HCT116 (cell line): ENCODE measurements at regions of chr4 and their contacts with region 1.

Region 1: DNA sequence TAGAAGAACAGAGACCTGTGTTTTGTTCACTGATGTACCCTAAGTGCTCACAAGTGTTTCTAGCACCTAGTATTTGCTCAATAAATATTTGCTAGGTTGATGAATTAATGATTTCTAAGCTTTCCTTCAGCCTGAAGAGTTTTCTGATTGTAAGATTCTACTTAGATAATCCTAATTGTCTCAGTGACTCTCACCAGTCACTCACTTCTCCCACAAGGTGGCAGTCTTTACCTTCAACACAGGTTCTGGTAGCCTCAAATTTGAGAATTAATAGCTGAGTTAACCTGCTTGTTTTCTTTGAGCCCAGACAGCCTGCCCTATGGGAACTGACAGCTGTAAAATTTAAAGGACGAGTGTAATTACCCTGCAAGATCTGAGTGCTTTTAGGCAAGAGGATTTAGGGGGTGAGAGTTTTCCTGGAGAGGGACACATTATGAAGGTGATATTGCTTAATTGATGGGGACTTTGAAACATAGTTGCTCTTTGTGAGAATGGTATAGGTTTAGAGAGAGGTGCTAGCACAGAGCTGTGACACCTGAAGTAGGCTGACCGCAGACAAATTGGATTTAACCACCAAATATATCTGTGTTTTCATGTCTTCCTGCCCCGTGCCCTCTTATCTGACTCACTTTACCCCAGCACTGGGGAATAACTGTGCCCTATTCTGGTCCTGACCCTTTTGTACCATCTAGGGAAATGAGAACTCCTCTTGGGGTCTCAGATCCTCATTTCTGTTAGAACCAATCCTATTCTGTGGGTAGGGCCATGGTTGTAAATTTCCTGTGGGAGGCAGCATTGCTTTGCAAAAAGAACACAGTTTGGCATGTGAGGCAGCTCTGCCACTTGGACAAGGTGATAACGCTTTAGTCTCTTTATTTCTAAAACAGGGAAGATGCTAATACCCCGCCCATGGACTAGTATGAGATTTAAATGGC is 27.7 kb downstream of the CD38 start:
- DNase-seq: peak; percentile 57
- ATAC-seq: peak; percentile 93
- H3K4me3 ChIP-seq: no peak overlapping the region
- H3K27ac ChIP-seq: no peak overlapping the region
- H3K4me1 ChIP-seq: no peaks in the 10 kb centered on the region
- H3K27me3 ChIP-seq: no peaks in the 10 kb centered on the region
- CTCF ChIP-seq: peak; percentile 71 to 90 (median 80)
- POLR2A ChIP-seq: no peak
- RAD21 ChIP-seq: peak; percentile 94

Region 2: DNA sequence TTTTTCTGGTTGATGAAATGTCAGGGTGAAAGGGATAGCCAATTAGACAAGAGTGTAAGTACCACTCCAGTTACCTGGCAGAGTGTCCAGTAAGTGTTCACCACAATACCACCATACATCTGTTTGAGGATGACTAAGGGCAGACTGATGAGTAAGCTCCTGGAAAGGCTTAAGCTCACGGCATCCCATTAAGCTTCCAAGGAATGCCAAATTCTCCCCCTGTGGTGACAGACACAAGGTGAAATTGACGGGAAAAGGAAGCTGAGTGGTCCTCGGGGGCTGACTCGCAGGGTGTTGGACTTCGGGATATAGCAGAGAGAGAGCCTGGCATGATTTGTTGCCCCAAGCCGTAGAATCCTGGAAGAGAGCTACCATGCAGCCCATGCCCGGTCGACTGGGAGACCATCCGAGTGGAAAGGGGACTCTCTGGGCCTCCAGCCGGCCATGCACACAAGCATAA is 110.6 kb before region 1 on chr4:
- CTCF ChIA-PET with region 1: no interaction called
- POLR2A ChIA-PET with region 1: no interaction called
- RAD21 ChIA-PET with region 1: no interaction called
- intact Hi-C with region 1: no loop called
- DNase-seq: peak; percentile 68
- ATAC-seq: peak; percentile 81
- H3K4me3 ChIP-seq: no peak overlapping the region
- H3K27ac ChIP-seq: no peak overlapping the region
- H3K4me1 ChIP-seq: peaks cover 6 to 42% of the 10 kb centered on the region in 2 experiments
- H3K27me3 ChIP-seq: no peaks in the 10 kb centered on the region
- CTCF ChIP-seq: no peak
- POLR2A ChIP-seq: no peak
- RAD21 ChIP-seq: no peak

Region 3: DNA sequence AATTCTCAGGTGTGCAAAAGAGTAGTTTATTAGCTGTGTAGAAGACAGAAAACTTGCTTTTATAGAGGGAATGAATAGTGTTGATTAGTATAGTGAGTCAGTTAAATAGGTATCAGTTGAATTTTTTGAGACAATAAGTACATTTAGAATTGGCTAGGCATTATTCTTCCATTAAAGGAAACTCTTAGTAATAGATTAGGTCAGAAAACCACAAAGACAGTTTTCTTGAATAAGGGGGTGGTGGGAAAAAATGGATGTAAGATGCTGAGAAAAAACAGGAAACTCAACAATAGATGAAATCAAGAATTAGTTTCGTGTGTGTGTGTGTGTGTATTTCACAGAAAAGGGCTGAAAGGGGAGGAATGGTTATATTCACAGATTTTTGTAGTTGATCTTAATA is 10.9 kb before region 1 on chr4:
- CTCF ChIA-PET with region 1: interaction called, 14 read pairs
- POLR2A ChIA-PET with region 1: no interaction called
- RAD21 ChIA-PET with region 1: no interaction called
- intact Hi-C with region 1: no loop called
- DNase-seq: no peak
- ATAC-seq: no peak
- H3K4me3 ChIP-seq: no peak overlapping the region
- H3K27ac ChIP-seq: no peak overlapping the region
- H3K4me1 ChIP-seq: no peaks in the 10 kb centered on the region
- H3K27me3 ChIP-seq: no peaks in the 10 kb centered on the region
- CTCF ChIP-seq: no peak
- POLR2A ChIP-seq: no peak
- RAD21 ChIP-seq: no peak

Region 4: GRCh38 chr4:15882675-15883086 is 76.8 kb after region 1 on chr4:
- CTCF ChIA-PET with region 1: interaction called, 76 read pairs
- POLR2A ChIA-PET with region 1: no interaction called
- RAD21 ChIA-PET with region 1: interaction called, 7 to 12 read pairs
- intact Hi-C with region 1: loop called (anchors 1 kb)
- DNase-seq: peak; percentile 79
- ATAC-seq: peak; percentile 97
- H3K4me3 ChIP-seq: no peak overlapping the region
- H3K27ac ChIP-seq: no peak overlapping the region
- H3K4me1 ChIP-seq: no peaks in the 10 kb centered on the region
- H3K27me3 ChIP-seq: no peaks in the 10 kb centered on the region
- CTCF ChIP-seq: peak; percentile 89 to 96 (median 95)
- POLR2A ChIP-seq: no peak
- RAD21 ChIP-seq: peak; percentile 98

Region 5: GRCh38 chr4:16001484-16001858 is 195.6 kb after region 1 on chr4:
- CTCF ChIA-PET with region 1: interaction called, 37 read pairs
- POLR2A ChIA-PET with region 1: no interaction called
- RAD21 ChIA-PET with region 1: interaction called in 1 of 2 experiments, 3 read pairs
- intact Hi-C with region 1: loop called (anchors 1 kb)
- DNase-seq: peak; percentile 61
- ATAC-seq: peak; percentile 97
- H3K4me3 ChIP-seq: no peak overlapping the region
- H3K27ac ChIP-seq: no peak overlapping the region
- H3K4me1 ChIP-seq: peaks cover 0 to 5% of the 10 kb centered on the region in 2 experiments; a peak in 1 of 4 replicates
- H3K27me3 ChIP-seq: no peaks in the 10 kb centered on the region
- CTCF ChIP-seq: peak; percentile 75 to 91 (median 81)
- POLR2A ChIP-seq: no peak
- RAD21 ChIP-seq: peak; percentile 86

Region 6: GRCh38 chr4:16264798-16265197 is 458.9 kb after region 1 on chr4:
- CTCF ChIA-PET with region 1: interaction called, 24 read pairs
- POLR2A ChIA-PET with region 1: no interaction called
- RAD21 ChIA-PET with region 1: interaction called, 3 to 10 read pairs
- intact Hi-C with region 1: loop called (anchors 1 kb)
- DNase-seq: peak; percentile 35
- ATAC-seq: no peak
- H3K4me3 ChIP-seq: no peak overlapping the region
- H3K27ac ChIP-seq: no peak overlapping the region
- H3K4me1 ChIP-seq: no peaks in the 10 kb centered on the region
- H3K27me3 ChIP-seq: no peaks in the 10 kb centered on the region
- CTCF ChIP-seq: peak; percentile 22 to 74 (median 61); a peak in 3 of 6 replicates
- POLR2A ChIP-seq: no peak
- RAD21 ChIP-seq: peak; percentile 76

Region 7: GRCh38 chr4:16278178-16278577 is 472.3 kb after region 1 on chr4:
- CTCF ChIA-PET with region 1: no interaction called
- POLR2A ChIA-PET with region 1: no interaction called
- RAD21 ChIA-PET with region 1: no interaction called
- intact Hi-C with region 1: no loop called
- DNase-seq: no peak
- ATAC-seq: no peak; the same call in 1 of the 2 replicates
- H3K4me3 ChIP-seq: no peak overlapping the region
- H3K27ac ChIP-seq: no peak overlapping the region
- H3K4me1 ChIP-seq: no peaks in the 10 kb centered on the region
- H3K27me3 ChIP-seq: no peaks in the 10 kb centered on the region; the same call in 1 of the 2 replicates
- CTCF ChIP-seq: peak; percentile 15 to 60 (median 46); a peak in 4 of 6 replicates
- POLR2A ChIP-seq: no peak
- RAD21 ChIP-seq: peak; percentile 42; the same call in 1 of the 2 replicates